ENCODE measurements at regions of chr1 and their contacts with region 1.

Region 1: DNA sequence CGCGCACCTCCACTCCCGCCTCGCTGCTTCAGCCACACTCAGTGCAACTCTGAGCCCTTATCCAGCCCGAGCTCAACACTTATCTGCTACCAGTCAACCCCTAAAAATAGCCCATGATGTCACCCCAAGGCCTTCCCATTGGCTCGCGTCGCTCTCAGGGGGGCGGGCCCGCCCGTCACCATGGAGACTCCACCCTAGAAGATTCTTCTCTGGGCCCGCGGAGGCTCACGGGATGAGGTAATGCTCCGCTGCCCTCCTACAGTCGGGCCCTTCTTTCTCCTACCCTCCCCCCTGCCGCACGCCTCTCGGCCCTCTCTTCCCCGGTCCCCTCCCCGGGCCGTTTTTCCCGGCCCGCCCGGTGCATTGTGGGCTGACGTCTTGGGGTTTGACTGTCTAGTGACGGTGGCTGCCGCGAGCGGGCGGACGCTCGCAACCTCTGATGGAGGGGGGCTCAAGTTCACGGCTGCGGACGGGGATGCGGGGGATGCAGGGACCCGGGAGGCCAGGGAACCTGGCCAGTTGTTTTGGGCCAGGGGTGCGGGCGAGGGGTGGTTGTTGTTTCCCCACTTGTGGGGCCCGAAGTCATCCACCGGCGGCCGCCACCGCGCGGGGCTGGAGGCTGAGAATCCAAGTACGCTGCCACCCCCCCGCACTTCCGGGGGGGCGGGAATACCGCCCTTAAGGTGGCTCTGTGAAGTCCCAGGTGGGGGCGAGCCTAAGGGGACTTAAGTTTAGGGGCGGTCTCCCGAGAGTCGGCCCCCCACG is at the start of gene JUN:
- DNase-seq: peak; percentile 99
- H3K4me3 ChIP-seq: peak within 1 kb of the TSS; percentile 91 to 96 (median 93)
- H3K27ac ChIP-seq: peak within 1 kb of the TSS; percentile 98
- H3K4me1 ChIP-seq: peaks cover 13% of the 10 kb centered on the region
- H3K27me3 ChIP-seq: no peaks in the 10 kb centered on the region
- CTCF ChIP-seq: peak in 1 of 2 donors; percentile 19
- total RNA-seq, gene JUN: 61.1 to 78.7 TPM

Region 2: GRCh38 chr1:58409890-58410289 is 374.3 kb before region 1 on chr1:
- CTCF ChIA-PET with region 1: no interaction called
- dilution Hi-C with region 1: no loop called
- in situ Hi-C with region 1: no loop called
- intact Hi-C with region 1: no loop called
- DNase-seq: no peak
- H3K4me3 ChIP-seq: no peak overlapping the region
- H3K27ac ChIP-seq: no peak overlapping the region
- H3K4me1 ChIP-seq: peaks cover 7% of the 10 kb centered on the region
- H3K27me3 ChIP-seq: no peaks in the 10 kb centered on the region
- CTCF ChIP-seq: no peak

Region 3: DNA sequence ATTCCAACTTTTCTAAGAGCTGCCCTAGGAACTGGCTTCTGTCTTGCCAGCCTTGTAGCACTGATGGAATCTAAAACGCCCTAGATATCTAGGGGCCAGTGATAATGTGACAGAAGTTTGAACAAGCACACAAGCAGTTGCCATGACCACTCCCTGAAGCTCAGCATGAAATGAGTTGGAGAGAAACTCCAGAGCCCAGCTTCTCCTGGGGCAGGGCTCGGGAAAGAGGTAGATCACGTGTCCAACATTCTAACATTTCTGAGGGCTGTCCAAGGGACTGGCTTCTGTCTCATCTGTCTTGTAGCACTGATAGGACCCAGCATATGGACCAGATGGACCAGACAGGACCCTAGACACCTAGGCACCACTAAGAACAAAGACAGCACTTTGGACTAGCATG is 275.5 kb before region 1 on chr1:
- CTCF ChIA-PET with region 1: no interaction called
- dilution Hi-C with region 1: no loop called
- in situ Hi-C with region 1: no loop called
- intact Hi-C with region 1: no loop called
- DNase-seq: no peak
- H3K4me3 ChIP-seq: no peak overlapping the region
- H3K27ac ChIP-seq: no peak overlapping the region
- H3K4me1 ChIP-seq: no peaks in the 10 kb centered on the region
- H3K27me3 ChIP-seq: no peaks in the 10 kb centered on the region
- CTCF ChIP-seq: no peak

Region 4: DNA sequence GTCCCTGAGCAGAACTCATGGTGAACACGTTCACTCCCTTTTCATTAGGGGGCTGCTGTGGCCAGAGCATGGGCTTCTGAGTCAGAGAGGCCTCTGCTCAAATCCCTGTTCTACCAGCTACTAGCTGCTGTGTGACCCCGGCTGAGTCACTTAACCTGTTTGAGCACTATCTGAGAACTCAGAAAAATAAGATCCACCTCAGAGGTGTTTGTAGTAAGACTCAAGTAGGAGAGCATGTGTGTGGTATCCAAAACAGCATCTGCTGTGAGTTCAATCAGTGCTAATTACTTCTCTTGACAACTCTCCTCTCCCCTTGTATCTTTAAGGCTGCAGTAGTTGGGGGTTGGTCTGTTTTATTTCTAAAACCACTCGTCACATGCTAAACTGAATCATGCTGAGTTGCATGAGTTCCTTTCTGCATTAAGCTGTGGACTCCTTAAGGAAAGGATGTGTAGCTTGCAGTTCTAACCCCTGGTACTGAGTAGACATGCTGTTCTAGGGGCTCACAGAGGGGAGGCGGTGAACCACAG is 39.4 kb after region 1 on chr1:
- CTCF ChIA-PET with region 1: no interaction called
- dilution Hi-C with region 1: loop called (anchors 5 kb)
- in situ Hi-C with region 1: no loop called
- intact Hi-C with region 1: no loop called
- DNase-seq: peak; percentile 88
- H3K4me3 ChIP-seq: no peak overlapping the region
- H3K27ac ChIP-seq: no peak overlapping the region
- H3K4me1 ChIP-seq: peaks cover 33% of the 10 kb centered on the region
- H3K27me3 ChIP-seq: no peaks in the 10 kb centered on the region
- CTCF ChIP-seq: no peak

Region 5: DNA sequence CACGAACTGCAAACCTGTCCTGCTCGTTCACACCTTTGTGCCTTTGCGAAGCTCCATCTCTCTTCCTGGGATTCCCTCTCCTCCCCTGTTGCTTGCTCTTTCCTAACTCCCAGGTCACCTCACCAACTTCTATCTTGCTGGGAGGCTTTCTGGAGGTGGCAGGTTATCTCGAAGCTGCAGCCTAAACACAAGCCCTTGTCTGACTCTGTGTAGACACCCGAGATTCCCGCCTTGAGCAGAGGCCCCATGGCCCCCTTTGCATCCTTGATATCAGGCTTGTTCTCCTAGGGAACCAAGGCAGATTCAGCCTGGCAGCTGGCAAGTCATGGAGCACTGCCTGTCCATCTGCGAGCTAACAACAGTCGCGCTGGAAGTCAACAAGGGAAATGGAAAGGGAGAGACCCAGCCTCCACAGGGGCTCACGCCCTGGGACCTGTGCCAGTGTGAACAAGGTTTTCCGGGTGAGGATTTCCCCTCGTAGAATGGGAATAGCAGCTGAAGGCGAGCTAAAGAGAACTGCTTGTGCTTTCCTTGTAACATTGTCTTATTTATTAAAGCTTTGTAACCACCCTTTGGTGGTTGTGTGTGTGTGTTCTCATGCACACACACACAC is 109.2 kb after region 1 on chr1:
- CTCF ChIA-PET with region 1: no interaction called
- dilution Hi-C with region 1: loop called (anchors 5 kb)
- in situ Hi-C with region 1: no loop called
- intact Hi-C with region 1: no loop called
- DNase-seq: no peak
- H3K4me3 ChIP-seq: no peak overlapping the region
- H3K27ac ChIP-seq: no peak overlapping the region
- H3K4me1 ChIP-seq: peaks cover 11% of the 10 kb centered on the region
- H3K27me3 ChIP-seq: no peaks in the 10 kb centered on the region
- CTCF ChIP-seq: no peak

Region 6: GRCh38 chr1:59015708-59016107 is 231.5 kb after region 1 on chr1:
- CTCF ChIA-PET with region 1: no interaction called
- dilution Hi-C with region 1: no loop called
- in situ Hi-C with region 1: no loop called
- intact Hi-C with region 1: loop called (anchors 2 kb)
- DNase-seq: peak; percentile 86
- H3K4me3 ChIP-seq: no peak overlapping the region
- H3K27ac ChIP-seq: peak overlapping the region; percentile 48
- H3K4me1 ChIP-seq: peaks cover 30% of the 10 kb centered on the region
- H3K27me3 ChIP-seq: no peaks in the 10 kb centered on the region
- CTCF ChIP-seq: no peak

Region 7: DNA sequence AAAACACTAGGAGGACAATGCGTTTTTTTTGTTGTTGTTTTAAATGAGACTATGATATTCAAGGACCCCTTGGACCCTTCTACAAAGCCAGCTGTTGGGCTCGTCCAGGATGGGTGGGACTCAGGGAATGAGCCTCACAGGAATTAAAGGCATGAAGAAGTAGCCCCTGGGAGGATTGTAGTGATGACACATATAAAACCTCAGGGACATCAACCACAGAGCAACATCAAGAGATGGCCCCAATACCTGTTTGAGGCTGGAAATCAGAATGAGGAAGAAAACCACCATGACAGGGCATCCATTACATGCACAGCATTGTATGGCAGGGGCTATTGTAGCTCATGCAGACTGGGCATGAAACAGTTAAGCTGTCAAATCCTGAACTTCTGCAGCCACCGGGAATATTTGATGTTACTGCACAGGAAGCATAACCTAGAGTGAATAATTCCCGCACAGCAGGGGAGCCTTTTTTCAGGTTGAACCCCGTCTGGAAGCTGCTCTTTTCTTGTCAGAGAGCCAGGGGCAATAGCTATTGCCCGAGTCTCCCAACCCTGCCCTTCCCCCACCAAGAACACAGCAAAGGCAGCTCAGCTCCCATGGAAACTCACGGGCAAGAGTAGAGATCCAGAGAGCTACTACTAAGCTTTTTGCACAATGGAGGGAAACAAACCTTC is 372.5 kb after region 1 on chr1:
- CTCF ChIA-PET with region 1: no interaction called
- dilution Hi-C with region 1: loop called (anchors 5 kb)
- in situ Hi-C with region 1: loop called in 1 of 2 experiments (anchors 10 kb)
- intact Hi-C with region 1: loop called (anchors 1 kb)
- DNase-seq: no peak
- H3K4me3 ChIP-seq: no peak overlapping the region
- H3K27ac ChIP-seq: no peak overlapping the region
- H3K4me1 ChIP-seq: peaks cover 8% of the 10 kb centered on the region
- H3K27me3 ChIP-seq: no peaks in the 10 kb centered on the region
- CTCF ChIP-seq: no peak

Region 8: DNA sequence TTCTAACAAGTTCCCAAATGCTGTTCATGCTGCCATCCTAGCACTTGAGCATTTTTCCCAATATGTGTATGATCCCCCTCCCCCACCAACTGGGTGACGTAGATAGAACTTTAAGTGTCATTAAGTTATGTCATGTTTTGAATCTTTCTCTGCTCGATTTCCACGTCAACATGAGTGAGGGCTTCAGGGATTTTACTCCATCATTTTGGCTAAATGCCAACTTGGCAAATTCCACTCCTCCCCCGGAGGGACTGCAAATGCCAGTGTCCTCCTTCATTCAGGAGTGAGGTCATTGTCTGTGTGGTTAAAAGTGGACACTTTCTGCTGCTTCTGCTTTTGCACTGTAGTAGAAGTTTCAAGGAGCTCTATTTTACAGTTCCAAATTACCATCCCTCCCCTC is 714.5 kb after region 1 on chr1:
- CTCF ChIA-PET with region 1: no interaction called
- dilution Hi-C with region 1: no loop called
- in situ Hi-C with region 1: no loop called
- intact Hi-C with region 1: loop called (anchors 2 kb)
- DNase-seq: peak; percentile 33
- H3K4me3 ChIP-seq: no peak overlapping the region
- H3K27ac ChIP-seq: peak overlapping the region; percentile 88
- H3K4me1 ChIP-seq: peaks cover 33% of the 10 kb centered on the region
- H3K27me3 ChIP-seq: no peaks in the 10 kb centered on the region
- CTCF ChIP-seq: no peak

Region 9: DNA sequence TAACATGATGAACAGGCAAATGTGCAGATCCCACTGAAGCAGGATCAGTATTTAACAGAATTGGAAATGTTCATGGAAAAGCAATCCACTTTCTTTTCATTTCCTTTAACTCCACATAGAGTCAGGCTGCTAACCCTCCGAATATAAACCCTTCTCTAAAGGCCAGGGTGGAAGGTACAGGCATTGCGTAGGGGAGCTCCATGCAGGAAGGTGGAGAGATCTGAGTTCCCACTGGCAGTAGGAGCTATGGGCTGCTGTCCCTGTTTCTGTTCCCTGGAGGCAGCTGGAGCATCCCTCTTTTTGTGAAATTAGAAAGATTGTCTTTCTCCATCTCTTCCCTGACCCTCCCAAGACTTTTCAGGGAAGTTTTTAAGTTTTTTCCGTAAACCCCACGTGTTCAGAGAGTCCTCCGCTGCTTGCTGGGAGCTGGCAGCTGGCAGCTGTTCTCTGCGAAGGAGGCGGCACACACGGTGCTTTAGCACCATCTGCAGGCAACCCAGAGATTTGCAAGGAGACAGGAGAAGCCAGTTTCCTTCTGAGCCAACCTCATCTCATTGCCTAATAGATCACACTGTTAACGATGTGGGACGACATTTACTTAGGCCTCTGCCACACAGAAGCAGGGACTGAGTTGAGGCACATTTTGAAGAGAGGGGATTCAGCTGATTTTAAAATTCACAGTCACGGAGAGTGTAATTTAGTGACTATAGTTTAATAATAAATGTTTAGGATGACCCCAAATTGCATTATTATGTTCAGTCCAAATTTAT is 975.2 kb after region 1 on chr1:
- CTCF ChIA-PET with region 1: no interaction called
- dilution Hi-C with region 1: no loop called
- in situ Hi-C with region 1: no loop called
- intact Hi-C with region 1: loop called (anchors 1 kb)
- DNase-seq: peak; percentile 73
- H3K4me3 ChIP-seq: no peak overlapping the region
- H3K27ac ChIP-seq: no peak overlapping the region
- H3K4me1 ChIP-seq: peaks cover 22% of the 10 kb centered on the region
- H3K27me3 ChIP-seq: no peaks in the 10 kb centered on the region
- CTCF ChIP-seq: peak; percentile 96